Activated CD8-positive, alpha-beta memory T cell treated with anti-CD3 and anti-CD28 coated beads, Interleukin-2, amount 10 ng/mL, durations not matched to agents 7 days and 5 days (primary cell): ENCODE measurements at regions of chr21 and their contacts with region 1.

Region 1: DNA sequence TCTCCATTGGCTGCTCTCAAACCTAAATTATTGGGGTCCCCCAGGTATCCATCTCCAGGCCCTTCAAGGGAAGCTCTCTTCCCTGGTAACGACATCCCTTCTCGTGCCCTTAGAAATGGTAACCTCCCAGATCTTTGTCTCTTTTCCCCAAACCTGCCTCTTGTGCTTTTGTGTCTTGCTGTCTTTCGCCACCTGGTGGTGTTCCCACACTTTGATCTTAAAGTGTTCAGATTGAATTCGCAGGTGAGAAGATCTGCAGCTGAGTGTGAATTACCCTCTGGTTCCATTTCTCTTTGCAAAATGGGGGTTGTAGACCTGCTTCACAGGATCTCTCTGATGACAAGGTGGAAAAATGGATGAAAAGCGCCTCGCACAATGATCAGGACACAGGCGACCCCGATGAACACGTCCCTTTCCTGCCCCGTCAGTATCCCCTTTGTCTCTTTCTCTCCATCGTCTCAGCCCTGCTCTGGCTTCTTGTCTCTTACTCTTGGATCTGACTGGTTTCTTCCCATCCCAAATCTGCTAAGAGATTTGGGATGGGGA is 53.1 kb downstream of the DOP1B start:
- DNase-seq: peak; percentile 67
- ATAC-seq: no peak
- H3K4me3 Mint-ChIP-seq: no peak overlapping the region
- H3K27ac Mint-ChIP-seq: no peak overlapping the region
- H3K4me1 Mint-ChIP-seq: peaks cover 25% of the 10 kb centered on the region
- H3K27me3 Mint-ChIP-seq: no peaks in the 10 kb centered on the region

Region 2: DNA sequence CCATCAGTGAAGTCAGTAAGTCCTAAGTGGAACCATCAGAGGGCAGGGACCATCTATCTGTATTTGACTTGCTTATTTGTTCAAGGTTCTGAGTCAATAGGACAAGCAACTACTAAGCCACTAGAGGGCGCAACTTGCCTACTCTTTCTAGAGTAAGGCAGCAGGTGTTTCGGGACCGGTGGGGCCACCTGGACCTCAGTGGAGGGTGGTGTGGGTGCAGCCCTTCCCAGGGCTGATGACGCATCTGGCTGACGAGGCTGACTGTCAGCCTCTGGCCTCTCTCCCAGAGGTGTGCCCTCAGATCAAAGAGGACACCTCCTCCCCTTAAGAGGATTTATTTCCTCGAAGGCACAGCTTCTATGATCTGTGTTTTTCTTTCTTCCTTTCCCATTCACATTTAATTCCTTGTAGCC is 68.2 kb before region 1 on chr21:
- CTCF ChIA-PET with region 1: interaction called, 21 read pairs
- DNase-seq: peak; percentile 91
- ATAC-seq: peak; percentile 94
- H3K4me3 Mint-ChIP-seq: no peak overlapping the region
- H3K27ac Mint-ChIP-seq: peak overlapping the region; percentile 65
- H3K4me1 Mint-ChIP-seq: peaks cover 34% of the 10 kb centered on the region
- H3K27me3 Mint-ChIP-seq: no peaks in the 10 kb centered on the region

Region 3: GRCh38 chr21:36149788-36150711 is 59.6 kb before region 1 on chr21:
- CTCF ChIA-PET with region 1: interaction called, 18 read pairs
- DNase-seq: no peak
- ATAC-seq: peak; percentile 43
- H3K4me3 Mint-ChIP-seq: no peak overlapping the region
- H3K27ac Mint-ChIP-seq: peak overlapping the region; percentile 70
- H3K4me1 Mint-ChIP-seq: peaks cover 32% of the 10 kb centered on the region
- H3K27me3 Mint-ChIP-seq: no peaks in the 10 kb centered on the region

Region 4: DNA sequence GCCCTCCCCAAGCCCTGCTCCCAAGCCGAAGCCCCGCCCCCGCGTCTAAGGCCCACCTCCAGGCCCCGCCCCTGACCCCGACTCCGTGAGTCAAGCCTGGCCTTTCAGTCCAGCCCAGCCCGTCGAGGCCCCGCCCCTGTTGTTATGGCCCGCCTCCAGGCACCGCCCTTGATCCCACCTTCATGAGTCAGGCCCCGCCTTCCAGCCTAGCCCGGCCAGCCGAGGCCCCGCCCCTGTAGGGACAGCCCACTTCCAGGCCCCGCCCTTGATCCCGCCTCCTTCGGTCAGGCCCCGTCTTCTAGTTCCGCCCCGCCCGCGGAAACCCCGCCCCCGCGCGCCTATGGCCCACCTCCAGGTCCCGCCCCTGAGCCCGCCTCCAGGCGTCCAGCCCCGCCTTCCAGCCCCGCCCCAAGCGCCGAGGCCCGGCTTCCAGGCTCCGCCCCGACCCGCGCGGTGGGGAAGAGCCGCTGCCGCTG is 53.3 kb before region 1 on chr21:
- CTCF ChIA-PET with region 1: interaction called, 18 read pairs
- DNase-seq: peak; percentile 100
- ATAC-seq: peak; percentile 90
- H3K4me3 Mint-ChIP-seq: peak overlapping the region; percentile 78
- H3K27ac Mint-ChIP-seq: no peak overlapping the region
- H3K4me1 Mint-ChIP-seq: peaks cover 25% of the 10 kb centered on the region
- H3K27me3 Mint-ChIP-seq: no peaks in the 10 kb centered on the region

Region 5: GRCh38 chr21:36174780-36175179 is 34.9 kb before region 1 on chr21:
- CTCF ChIA-PET with region 1: interaction called, 21 read pairs
- DNase-seq: no peak
- ATAC-seq: no peak
- H3K4me3 Mint-ChIP-seq: no peak overlapping the region
- H3K27ac Mint-ChIP-seq: peak overlapping the region; percentile 15
- H3K4me1 Mint-ChIP-seq: peaks cover 27% of the 10 kb centered on the region
- H3K27me3 Mint-ChIP-seq: no peaks in the 10 kb centered on the region